ENCODE measurements at regions of chr1 and their contacts with region 1.

Region 1: GRCh38 chr1:153494976-153495535 is 34.6 kb upstream of the S100A7 start:
- DNase-seq: peak; percentile 59
- H3K4me3 ChIP-seq: no peak overlapping the region
- CTCF ChIP-seq: peak; percentile 95

Region 2: DNA sequence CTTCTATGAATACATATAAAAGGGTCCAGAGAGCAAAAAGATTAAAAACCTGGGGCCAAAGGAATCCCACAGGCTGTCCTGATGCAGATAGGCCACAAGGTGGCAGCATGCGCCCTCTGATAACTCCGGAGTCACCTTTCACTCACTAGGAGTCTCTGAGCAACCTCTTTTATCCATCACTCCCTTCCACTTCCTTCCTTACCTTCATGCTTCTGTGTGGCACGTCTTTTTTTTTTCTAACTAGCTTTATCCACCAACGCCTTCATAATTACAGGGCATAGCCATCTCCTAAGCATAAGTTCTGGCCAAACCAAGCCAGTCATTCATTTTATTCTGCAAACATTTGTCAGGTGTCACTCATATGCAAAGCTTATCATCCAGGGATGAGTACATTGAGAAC is 142.5 kb before region 1 on chr1:
- in situ Hi-C with region 1: loop called (anchors 10 kb)
- DNase-seq: peak; percentile 61
- H3K4me3 ChIP-seq: no peak overlapping the region
- CTCF ChIP-seq: peak; percentile 88